Activated CD8-positive, alpha-beta T cell treated with anti-CD3 and anti-CD28 coated beads, Interleukin-2, amount 10 ng/mL, durations not matched to agents 7 days and 5 days (primary cell): ENCODE measurements at regions of chr1 and their contacts with region 1.

Region 1: DNA sequence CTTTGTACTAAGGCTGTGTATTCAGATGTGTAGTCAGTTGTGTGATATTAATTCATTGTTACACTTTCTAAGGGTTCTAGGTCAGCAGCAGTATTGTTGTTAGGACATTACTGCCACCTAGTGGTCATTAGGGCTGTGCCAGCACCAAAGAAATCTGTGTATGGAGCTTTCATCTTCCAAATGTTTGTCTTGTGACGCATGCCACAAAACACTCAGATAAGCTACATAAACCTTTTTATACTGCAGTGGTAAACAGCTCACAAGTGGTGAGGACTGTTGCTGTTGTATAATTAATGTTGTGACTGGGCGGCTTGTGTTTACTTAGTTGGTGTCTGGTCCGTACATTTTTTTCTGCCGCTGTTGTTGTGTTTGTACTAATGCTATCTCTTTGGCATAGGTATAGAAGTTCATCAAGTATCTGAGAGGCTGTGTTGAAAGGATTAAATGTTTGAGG is 51.7 kb downstream of the S1PR1 start:
- DNase-seq: peak; percentile 79
- ATAC-seq: peak; percentile 58
- H3K4me3 Mint-ChIP-seq: no peak overlapping the region
- H3K27ac Mint-ChIP-seq: no peak overlapping the region
- H3K4me1 Mint-ChIP-seq: peaks cover 76% of the 10 kb centered on the region
- H3K27me3 Mint-ChIP-seq: no peaks in the 10 kb centered on the region

Region 2: GRCh38 chr1:100866041-100866900 is 422.2 kb before region 1 on chr1:
- CTCF ChIA-PET with region 1: interaction called, 11 read pairs
- POLR2A ChIA-PET with region 1: no interaction called
- DNase-seq: no peak
- ATAC-seq: peak; percentile 49
- H3K4me3 Mint-ChIP-seq: no peak overlapping the region
- H3K27ac Mint-ChIP-seq: no peak overlapping the region
- H3K4me1 Mint-ChIP-seq: no peaks in the 10 kb centered on the region
- H3K27me3 Mint-ChIP-seq: no peaks in the 10 kb centered on the region

Region 3: DNA sequence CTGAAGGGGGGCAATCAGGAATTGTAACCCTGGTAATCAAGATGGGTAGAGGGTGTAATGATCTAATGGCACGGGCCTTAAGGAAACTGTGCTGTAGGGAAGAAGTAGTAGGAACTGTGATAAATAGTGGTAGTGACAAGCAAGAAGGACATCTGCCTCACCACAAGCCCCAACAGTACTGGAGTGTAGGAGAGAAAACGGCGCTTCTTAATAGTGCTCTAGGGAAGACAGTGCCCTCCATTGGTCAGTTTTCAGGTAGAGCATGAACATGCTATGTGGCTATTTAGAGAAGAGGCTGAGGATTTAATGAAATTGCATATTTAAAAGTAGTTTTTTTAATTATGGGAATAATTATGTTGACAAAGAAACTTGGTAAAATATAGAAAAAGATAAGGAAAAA is 360.4 kb before region 1 on chr1:
- CTCF ChIA-PET with region 1: interaction called, 52 read pairs
- POLR2A ChIA-PET with region 1: interaction called, 3 read pairs
- DNase-seq: no peak
- ATAC-seq: peak; percentile 36
- H3K4me3 Mint-ChIP-seq: no peak overlapping the region
- H3K27ac Mint-ChIP-seq: no peak overlapping the region
- H3K4me1 Mint-ChIP-seq: peaks cover 48% of the 10 kb centered on the region
- H3K27me3 Mint-ChIP-seq: no peaks in the 10 kb centered on the region

Region 4: GRCh38 chr1:101122452-101123166 is 165.9 kb before region 1 on chr1:
- CTCF ChIA-PET with region 1: interaction called, 19 read pairs
- POLR2A ChIA-PET with region 1: no interaction called
- DNase-seq: peak; percentile 78
- ATAC-seq: peak; percentile 65
- H3K4me3 Mint-ChIP-seq: peak overlapping the region; percentile 50
- H3K27ac Mint-ChIP-seq: peak overlapping the region; percentile 82
- H3K4me1 Mint-ChIP-seq: peaks cover 71% of the 10 kb centered on the region
- H3K27me3 Mint-ChIP-seq: no peaks in the 10 kb centered on the region

Region 5: DNA sequence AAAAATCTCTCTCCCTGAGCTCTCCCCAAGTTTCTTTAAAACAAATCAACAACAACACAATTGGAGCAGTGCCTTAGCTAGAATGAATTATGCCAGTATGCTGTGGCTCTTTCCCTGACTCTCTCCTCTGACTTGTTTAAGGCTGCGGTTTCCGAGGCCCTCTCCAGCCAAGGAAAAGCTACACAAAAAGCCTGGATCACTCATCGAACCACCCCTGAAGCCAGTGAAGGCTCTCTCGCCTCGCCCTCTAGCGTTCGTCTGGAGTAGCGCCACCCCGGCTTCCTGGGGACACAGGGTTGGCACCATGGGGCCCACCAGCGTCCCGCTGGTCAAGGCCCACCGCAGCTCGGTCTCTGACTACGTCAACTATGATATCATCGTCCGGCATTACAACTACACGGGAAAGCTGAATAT is 49.8 kb before region 1 on chr1:
- CTCF ChIA-PET with region 1: interaction called, 162 read pairs
- POLR2A ChIA-PET with region 1: interaction called, 13 read pairs
- DNase-seq: peak; percentile 92
- ATAC-seq: peak; percentile 53
- H3K4me3 Mint-ChIP-seq: peak overlapping the region; percentile 98
- H3K27ac Mint-ChIP-seq: peak overlapping the region; percentile 95
- H3K4me1 Mint-ChIP-seq: peaks cover 69% of the 10 kb centered on the region
- H3K27me3 Mint-ChIP-seq: no peaks in the 10 kb centered on the region

Region 6: GRCh38 chr1:101262630-101263348 is 25.7 kb before region 1 on chr1:
- CTCF ChIA-PET with region 1: interaction called, 20 read pairs
- POLR2A ChIA-PET with region 1: interaction called, 3 read pairs
- DNase-seq: peak; percentile 56
- ATAC-seq: peak; percentile 62
- H3K4me3 Mint-ChIP-seq: peak overlapping the region; percentile 59
- H3K27ac Mint-ChIP-seq: peak overlapping the region; percentile 67
- H3K4me1 Mint-ChIP-seq: peaks cover 79% of the 10 kb centered on the region
- H3K27me3 Mint-ChIP-seq: no peaks in the 10 kb centered on the region

Region 7: DNA sequence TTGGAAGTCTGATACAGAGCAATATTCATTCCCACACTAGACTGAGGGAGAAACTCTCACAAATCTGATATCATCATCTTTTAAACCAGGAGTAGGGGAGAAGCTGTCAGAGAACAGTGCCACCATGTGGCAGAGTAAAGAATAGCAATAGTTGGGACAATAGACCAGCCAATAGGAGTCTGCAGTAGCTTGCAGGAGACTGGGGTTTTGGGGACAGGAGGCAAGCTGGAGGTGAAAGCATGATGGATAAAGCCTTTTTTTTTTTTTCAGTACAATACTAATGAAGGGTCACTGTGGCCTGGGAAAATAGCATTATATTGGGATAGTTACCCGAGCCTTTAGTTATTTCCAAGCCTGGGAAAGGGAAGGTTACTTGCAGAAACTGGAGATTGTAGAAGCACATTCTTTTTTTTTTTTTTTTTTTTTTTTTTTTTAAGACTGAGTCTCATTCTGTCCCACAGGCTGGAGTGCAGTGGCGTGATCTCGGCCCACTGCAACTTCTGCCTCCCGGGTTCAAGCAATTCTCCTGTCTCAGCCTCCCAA is 69.0 kb after region 1 on chr1:
- CTCF ChIA-PET with region 1: interaction called, 17 read pairs
- POLR2A ChIA-PET with region 1: interaction called, 7 read pairs
- DNase-seq: peak; percentile 85
- ATAC-seq: peak; percentile 100
- H3K4me3 Mint-ChIP-seq: no peak overlapping the region
- H3K27ac Mint-ChIP-seq: peak overlapping the region; percentile 60
- H3K4me1 Mint-ChIP-seq: peaks cover 8% of the 10 kb centered on the region
- H3K27me3 Mint-ChIP-seq: peaks cover 5% of the 10 kb centered on the region